Right cardiac atrium (tissue), 5 donors: ENCODE measurements at regions of chr2 and their contacts with region 1.

Region 1: DNA sequence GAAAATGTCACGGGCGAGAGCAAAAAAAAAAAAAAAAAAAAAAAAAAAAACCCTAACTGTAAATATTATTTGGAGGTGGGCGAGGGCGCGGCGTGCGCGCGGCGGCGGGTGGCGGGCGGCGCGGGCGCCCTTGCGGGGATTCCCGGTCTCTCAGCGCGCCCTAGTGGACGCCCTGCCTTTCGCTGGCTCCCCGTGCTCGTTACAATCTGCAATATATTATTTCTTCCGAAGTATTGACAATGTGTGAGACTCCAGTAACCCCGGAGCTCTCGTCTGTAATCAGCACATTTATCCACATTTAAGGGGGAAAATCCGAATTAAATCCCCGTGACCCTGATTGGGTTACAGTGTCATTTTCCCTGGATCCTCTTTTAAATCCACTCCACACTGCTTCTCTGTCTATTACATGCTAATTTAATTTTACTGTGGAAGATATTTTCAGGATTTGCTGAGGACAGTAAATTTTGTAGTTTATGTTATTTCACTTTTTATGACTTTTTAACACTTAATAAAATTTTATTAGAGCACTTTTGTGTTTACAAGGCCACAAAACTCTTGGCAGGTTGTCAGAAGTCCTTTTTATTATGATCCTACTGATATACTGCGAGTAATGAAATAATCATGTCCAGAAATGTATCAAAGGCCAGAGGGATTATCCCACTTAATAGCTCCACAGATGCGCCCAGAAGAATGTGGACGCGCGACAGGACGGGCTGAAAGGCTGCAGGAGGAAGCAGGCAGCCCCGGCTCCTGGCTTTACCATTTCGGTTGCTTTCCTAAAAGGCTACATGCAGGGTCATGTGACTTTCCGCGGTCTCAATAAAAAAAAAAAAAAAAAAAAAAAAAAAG is 369.1 kb downstream of the MTX2 start:
- DNase-seq: peak; percentile 67 to 89 (median 85)
- ATAC-seq: peak; percentile 87 to 92
- H3K4me3 ChIP-seq: peak overlapping the region; percentile 41
- H3K27ac ChIP-seq: no peak overlapping the region
- H3K4me1 ChIP-seq: no peaks in the 10 kb centered on the region
- H3K27me3 ChIP-seq: no peaks in the 10 kb centered on the region

Region 2: GRCh38 chr2:175631245-175631623 is 1007.2 kb before region 1 on chr2:
- intact Hi-C with region 1: no loop called
- DNase-seq: no peak
- ATAC-seq: no peak
- H3K4me3 ChIP-seq: no peak overlapping the region
- H3K27ac ChIP-seq: no peak overlapping the region
- H3K4me1 ChIP-seq: no peaks in the 10 kb centered on the region
- H3K27me3 ChIP-seq: no peaks in the 10 kb centered on the region

Region 3: DNA sequence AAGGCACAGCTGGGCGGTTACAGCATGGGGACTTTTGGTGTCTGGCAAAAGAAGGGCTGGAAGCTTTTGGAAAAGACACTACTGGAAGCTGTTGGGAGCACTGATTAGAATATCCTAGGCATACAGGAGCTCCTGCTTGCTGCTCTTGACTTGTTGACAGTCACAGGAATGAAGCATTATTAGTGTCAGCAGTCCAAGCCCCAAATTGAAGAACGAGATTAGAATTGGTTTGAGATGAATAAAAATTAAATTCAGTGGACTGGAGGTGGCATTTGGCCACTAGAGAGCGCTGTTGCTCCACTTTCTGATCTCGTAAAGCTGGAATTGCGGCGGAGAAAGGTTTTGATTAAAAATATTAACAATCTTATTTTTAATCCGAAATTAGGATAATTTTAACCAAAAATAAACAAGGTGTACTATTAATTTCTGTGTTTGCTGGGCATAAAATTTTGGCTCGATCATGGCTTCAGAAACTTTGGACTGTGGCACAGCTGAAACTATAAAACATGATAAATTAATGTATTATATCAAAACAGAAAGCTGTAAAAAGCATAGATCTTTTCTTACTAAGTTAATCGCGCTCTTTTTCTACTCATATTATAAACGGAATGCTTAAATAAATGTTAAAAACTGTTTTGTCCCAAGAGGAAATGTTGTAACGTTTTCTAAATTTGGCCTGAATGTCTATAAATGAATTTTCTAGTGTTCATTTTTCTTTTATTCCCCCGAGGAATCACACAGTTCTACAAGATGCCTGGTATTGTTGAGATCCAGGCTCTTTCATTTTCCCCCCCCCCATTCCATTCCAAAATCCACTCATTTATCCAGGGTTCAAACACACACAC is 511.2 kb before region 1 on chr2:
- intact Hi-C with region 1: loop called in 3 of 4 experiments (anchors 5 kb)
- DNase-seq: peak in 2 of 3 donors; percentile 64 to 87
- ATAC-seq: no peak
- H3K4me3 ChIP-seq: no peak overlapping the region
- H3K27ac ChIP-seq: no peak overlapping the region
- H3K4me1 ChIP-seq: peaks cover 9% of the 10 kb centered on the region
- H3K27me3 ChIP-seq: peaks cover 9% of the 10 kb centered on the region

Region 4: DNA sequence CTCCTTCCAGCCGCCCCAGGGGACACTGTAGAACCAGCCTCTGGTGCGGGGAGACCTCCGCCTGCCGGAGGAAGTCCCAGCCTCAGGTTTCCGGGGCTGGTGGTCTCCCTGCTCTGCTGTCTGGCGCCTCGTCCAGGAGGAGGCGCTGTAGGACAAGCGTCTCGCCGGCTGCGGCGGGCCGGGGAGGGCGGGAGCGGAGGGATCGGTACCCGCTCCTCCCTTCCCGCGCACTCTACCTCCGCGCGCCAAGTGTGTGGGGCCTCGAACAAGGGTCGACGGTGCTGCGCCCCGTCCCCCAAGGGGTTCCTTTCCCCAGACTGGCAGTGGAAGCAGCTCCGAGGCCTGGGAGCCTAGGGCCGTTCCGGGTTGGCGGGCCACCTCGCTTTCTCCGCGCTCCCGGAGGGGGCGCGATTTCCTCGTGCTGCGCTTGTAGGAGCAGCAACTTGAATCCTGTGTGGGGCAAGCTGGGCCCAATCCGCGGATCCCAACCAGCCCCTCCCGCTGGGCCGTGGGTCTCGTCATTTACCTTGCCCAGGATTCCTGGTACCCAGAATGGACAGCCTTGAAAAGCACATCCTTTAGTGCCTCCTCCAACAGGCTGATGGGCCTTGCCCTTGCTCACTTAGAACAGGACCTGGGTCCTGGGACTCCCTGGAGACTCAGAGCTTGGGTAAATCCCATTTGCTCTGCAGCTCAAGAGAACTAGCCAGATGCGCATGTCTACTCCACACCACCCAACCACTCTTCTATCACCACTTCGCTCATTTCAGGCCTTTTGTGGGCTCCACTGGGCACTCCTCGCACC is 497.7 kb before region 1 on chr2:
- intact Hi-C with region 1: loop called (anchors 5 kb)
- DNase-seq: peak; percentile 69 to 88 (median 86)
- ATAC-seq: peak; percentile 92 to 95
- H3K4me3 ChIP-seq: peak overlapping the region; percentile 32
- H3K27ac ChIP-seq: no peak overlapping the region
- H3K4me1 ChIP-seq: no peaks in the 10 kb centered on the region
- H3K27me3 ChIP-seq: peaks cover 8% of the 10 kb centered on the region

Region 5: GRCh38 chr2:176200981-176201380 is 437.4 kb before region 1 on chr2:
- intact Hi-C with region 1: no loop called
- DNase-seq: peak in 1 of 3 donors; percentile 33
- ATAC-seq: no peak
- H3K4me3 ChIP-seq: no peak overlapping the region
- H3K27ac ChIP-seq: no peak overlapping the region
- H3K4me1 ChIP-seq: no peaks in the 10 kb centered on the region
- H3K27me3 ChIP-seq: no peaks in the 10 kb centered on the region

Region 6: DNA sequence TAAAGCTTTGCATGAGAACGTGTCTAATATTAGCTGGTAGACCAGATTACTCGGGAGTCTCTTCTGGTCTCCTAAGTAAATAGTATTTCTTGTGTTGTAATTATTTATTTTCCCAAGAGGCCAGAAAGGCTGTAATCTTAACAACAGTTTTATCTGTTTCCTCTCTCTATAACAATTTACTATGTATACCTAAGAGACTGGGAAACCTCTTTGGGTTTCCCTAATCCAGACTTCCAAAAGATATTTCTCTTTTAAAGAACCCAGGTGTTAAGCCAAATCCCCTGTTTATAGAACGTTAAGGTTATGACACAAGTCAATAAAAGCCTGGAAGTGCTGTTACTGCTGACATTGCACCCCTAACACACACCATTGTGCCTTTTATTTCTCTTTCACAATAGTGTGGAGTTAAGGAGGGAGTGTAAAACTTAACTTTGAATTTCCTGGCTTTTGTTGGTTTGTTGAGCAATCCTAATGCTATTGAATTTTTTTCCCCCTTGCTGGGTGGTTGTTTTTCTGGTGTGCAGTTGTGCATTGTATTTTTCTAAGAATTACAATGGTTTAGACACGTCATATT is 176.5 kb before region 1 on chr2:
- intact Hi-C with region 1: loop called in 3 of 4 experiments (anchors 10 kb)
- DNase-seq: no peak
- ATAC-seq: peak; percentile 28 to 57
- H3K4me3 ChIP-seq: no peak overlapping the region
- H3K27ac ChIP-seq: no peak overlapping the region
- H3K4me1 ChIP-seq: no peaks in the 10 kb centered on the region
- H3K27me3 ChIP-seq: peaks cover 2% of the 10 kb centered on the region

Region 7: DNA sequence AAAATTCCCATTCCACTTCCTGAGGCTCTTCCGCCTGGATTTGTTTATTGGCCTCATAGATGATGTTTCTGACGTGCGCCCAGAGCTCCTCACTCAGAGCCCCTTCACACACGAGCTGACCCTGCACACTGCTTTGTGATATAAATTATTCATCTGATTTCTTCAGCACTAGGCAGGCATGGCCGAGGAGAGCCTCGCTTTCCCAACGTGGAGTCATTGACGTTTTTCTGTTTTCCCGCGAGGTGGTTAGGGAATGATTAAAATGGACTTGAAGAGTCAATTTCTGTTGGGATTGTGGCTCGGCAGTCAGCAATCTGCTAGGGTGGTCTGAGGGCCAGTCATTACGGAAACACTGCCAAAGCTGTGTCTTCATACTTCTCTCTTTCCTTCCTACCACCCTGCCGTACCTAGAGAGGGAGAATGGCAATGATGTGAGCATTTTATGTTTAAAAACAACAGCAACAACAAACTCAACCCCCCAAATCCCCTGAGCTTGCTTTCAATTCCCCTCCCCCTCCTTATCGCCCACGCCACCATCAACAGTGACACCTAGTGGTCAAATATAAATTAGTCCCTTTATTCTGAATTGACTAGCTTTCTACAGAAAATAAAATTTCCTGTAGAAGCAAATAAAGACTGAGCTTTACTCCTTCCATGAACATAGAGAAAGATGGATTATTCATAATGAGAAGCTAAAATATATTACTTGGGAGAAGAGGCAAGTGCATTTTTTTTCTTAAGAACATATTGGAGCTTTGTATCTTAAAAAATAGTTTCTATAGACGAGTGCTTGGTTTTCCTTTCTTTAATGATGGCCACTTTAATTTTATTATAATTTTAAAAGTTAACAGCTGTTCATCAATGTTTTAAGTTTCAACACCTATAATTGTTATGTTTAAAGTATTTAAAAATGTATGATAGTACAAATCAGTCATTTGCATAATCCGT is 84.0 kb before region 1 on chr2:
- intact Hi-C with region 1: loop called in 2 of 4 experiments (anchors 5 to 10 kb)
- DNase-seq: peak in 1 of 3 donors; percentile 60
- ATAC-seq: peak; percentile 65 to 82
- H3K4me3 ChIP-seq: peak overlapping the region; percentile 38
- H3K27ac ChIP-seq: peak overlapping the region; percentile 14
- H3K4me1 ChIP-seq: peaks cover 2% of the 10 kb centered on the region
- H3K27me3 ChIP-seq: peaks cover 2% of the 10 kb centered on the region